Activated B cell treated with CpG ODN at 0.5 μM for 24 hours (primary cell): ENCODE measurements at regions of chr17 and their contacts with region 1.

Region 1: DNA sequence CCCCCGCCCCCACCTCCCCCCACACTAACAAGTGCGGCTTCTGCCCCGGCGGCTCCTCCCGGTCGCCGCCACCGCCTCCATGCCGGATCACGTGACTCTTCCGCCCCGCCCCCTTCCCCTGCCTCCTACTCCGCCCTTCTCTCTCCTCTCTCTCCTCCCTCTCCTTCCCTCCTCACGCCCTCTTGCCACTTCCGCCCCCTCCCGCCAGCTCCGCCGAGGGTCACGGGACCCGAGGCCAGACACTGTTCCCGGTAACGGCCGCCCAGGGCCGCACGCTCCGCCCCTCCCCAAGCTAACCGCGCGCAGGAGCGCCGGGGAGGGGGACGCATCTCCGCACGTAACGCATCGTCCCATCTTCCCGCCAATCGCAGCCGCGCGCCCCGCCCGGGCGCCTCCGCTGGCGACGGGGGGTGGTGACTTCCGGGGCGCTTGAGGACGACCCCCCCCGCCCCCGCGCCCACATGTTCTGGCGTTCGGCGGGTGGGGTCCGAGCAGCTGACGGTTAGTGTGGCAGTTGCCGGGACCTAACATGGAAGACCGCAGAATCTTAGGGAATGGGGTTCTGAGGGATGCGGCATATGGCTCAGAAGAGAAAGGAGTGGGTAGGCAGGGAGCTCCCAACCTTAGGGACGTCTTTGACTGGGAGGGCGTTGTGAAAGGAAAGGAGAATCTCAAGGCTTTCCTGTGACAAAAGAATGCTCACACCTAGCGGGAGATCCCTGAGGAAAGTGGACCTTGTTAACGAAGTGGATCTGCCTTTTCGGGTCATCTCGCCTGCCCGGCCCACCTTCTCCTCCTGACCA is at the start of gene USP32:
- DNase-seq: peak; percentile 94
- ATAC-seq: peak; percentile 88
- H3K4me3 Mint-ChIP-seq: peak within 1 kb of the TSS; percentile 97
- H3K27ac Mint-ChIP-seq: peak within 1 kb of the TSS; percentile 96
- H3K4me1 Mint-ChIP-seq: peaks cover 66% of the 10 kb centered on the region
- H3K27me3 Mint-ChIP-seq: no peaks in the 10 kb centered on the region
- CTCF ChIP-seq: no peak
- total RNA-seq, gene USP32: 48.9 and 59.2 TPM in 2 replicates

Region 2: DNA sequence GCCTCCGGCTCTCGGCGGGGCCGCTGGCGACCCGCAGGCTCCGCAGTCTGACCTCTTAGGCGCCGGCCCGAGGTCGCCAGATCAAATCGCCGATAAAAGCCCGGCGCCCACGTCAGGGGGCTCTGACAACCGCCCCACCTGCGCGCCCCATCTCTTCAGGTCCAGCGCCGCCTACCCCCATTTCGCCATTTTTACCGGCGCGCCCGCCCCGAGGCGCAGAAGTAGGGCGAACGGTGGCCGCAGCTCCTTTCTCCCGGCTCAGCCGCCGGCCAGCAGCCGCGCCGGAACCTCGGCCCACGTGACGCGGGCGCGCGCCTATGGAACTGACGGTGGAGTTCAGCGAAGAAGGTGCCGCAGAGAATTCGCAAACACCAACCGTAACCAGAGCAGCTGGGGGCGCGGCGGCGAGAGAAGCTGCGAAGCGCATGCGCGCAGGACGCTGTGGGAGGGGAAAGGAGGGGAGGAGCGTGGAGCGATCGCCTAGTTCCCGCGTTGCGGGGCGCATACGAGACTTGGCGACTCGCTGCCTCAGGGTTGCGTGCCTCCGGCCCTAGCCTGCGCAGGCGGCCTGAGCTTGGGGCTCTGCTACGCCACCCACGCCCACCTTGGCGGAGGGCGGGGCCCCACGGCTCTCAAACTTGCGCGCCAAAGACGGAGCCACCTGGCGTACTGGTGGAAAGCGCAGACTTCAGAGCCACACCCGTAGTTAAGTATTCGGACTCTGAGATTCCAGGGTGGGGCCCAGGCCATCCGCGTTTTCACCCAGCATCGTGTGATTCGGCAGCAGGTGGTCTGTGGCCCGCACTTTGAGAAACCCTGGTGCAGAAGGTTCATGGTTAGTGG is 1285.6 kb before region 1 on chr17 and contains the start of gene TRIM37:
- CTCF ChIA-PET with region 1: no interaction called
- POLR2A ChIA-PET with region 1: no interaction called
- intact Hi-C with region 1: loop called (anchors 5 kb)
- DNase-seq: peak; percentile 98
- ATAC-seq: peak; percentile 96
- H3K4me3 Mint-ChIP-seq: peak within 1 kb of the TSS; percentile 94
- H3K27ac Mint-ChIP-seq: peak within 1 kb of the TSS; percentile 82
- H3K4me1 Mint-ChIP-seq: peaks cover 28% of the 10 kb centered on the region
- H3K27me3 Mint-ChIP-seq: no peaks in the 10 kb centered on the region
- CTCF ChIP-seq: no peak
- total RNA-seq, gene TRIM37: 16.4 and 17.3 TPM in 2 replicates

Region 3: GRCh38 chr17:59870482-59870881 is 521.8 kb before region 1 on chr17:
- CTCF ChIA-PET with region 1: no interaction called
- POLR2A ChIA-PET with region 1: interaction called, 10 read pairs
- intact Hi-C with region 1: no loop called
- DNase-seq: no peak
- ATAC-seq: no peak
- H3K4me3 Mint-ChIP-seq: no peak overlapping the region
- H3K27ac Mint-ChIP-seq: no peak overlapping the region
- H3K4me1 Mint-ChIP-seq: no peaks in the 10 kb centered on the region
- H3K27me3 Mint-ChIP-seq: no peaks in the 10 kb centered on the region
- CTCF ChIP-seq: no peak

Region 4: GRCh38 chr17:60087882-60088669 is 304.2 kb before region 1 on chr17:
- CTCF ChIA-PET with region 1: no interaction called
- POLR2A ChIA-PET with region 1: interaction called, 14 read pairs
- intact Hi-C with region 1: no loop called
- DNase-seq: no peak
- ATAC-seq: no peak
- H3K4me3 Mint-ChIP-seq: peak overlapping the region; percentile 2
- H3K27ac Mint-ChIP-seq: peak overlapping the region; percentile 91
- H3K4me1 Mint-ChIP-seq: peaks cover 72% of the 10 kb centered on the region
- H3K27me3 Mint-ChIP-seq: no peaks in the 10 kb centered on the region
- CTCF ChIP-seq: no peak

Region 5: DNA sequence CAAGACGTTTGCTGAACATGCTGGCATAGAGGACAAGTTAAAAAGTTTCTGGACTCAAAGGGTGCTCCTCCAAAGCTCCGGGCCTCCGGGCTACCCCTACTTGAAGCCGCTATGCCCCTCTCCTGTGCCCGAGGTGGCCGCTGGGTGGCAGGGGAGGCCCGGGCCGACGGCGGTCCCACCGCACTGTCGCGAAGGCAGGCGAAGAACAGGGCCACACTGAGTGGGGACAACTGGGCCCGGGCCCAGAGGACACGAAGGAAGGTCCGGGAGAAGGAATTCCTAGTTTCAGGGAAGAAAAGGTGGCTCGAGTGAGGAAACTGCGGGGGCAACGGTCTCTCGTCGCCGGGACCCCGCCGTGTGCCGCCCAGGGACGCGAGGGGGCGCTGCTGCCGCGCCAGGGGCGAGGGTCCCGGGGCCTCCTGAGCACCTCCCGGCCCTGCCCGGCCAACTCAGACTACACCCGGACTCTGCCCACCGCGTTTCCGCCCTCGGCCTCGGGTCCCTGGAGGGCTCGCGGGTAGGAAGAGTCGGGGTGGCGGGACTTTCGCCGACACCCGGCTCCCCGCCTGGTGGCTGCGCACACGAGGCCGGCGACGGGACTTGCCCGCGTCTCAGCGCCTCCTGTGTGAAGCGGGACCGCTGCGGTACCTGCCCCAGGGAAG is 29.2 kb after region 1 on chr17:
- CTCF ChIA-PET with region 1: interaction called, 3 read pairs
- POLR2A ChIA-PET with region 1: interaction called, 12 read pairs
- intact Hi-C with region 1: loop called (anchors 1 kb)
- DNase-seq: peak; percentile 79
- ATAC-seq: peak; percentile 93
- H3K4me3 Mint-ChIP-seq: peak overlapping the region; percentile 85
- H3K27ac Mint-ChIP-seq: peak overlapping the region; percentile 74
- H3K4me1 Mint-ChIP-seq: peaks cover 8% of the 10 kb centered on the region
- H3K27me3 Mint-ChIP-seq: no peaks in the 10 kb centered on the region
- CTCF ChIP-seq: peak; percentile 100

Region 6: GRCh38 chr17:60525685-60526514 is 133.7 kb after region 1 on chr17 and contains the start of gene APPBP2:
- CTCF ChIA-PET with region 1: no interaction called
- POLR2A ChIA-PET with region 1: no interaction called
- intact Hi-C with region 1: loop called (anchors 10 kb)
- DNase-seq: peak; percentile 76
- ATAC-seq: peak; percentile 84
- H3K4me3 Mint-ChIP-seq: peak within 1 kb of the TSS; percentile 96
- H3K27ac Mint-ChIP-seq: peak within 1 kb of the TSS; percentile 93
- H3K4me1 Mint-ChIP-seq: peaks cover 42% of the 10 kb centered on the region
- H3K27me3 Mint-ChIP-seq: no peaks in the 10 kb centered on the region
- CTCF ChIP-seq: no peak
- total RNA-seq, gene APPBP2: 25.5 and 29.9 TPM in 2 replicates